MCF 10A (cell line): ENCODE measurements at regions of chr4 and their contacts with region 1.

Region 1: GRCh38 chr4:140170299-140170698 is 16.3 kb upstream of the MAML3 start:
- DNase-seq: no peak
- H3K4me3 Mint-ChIP-seq: no peak overlapping the region
- H3K27ac Mint-ChIP-seq: no peak overlapping the region
- H3K4me1 Mint-ChIP-seq: no peaks in the 10 kb centered on the region
- H3K27me3 Mint-ChIP-seq: no peaks in the 10 kb centered on the region
- CTCF ChIP-seq: no peak

Region 2: GRCh38 chr4:140186651-140187315 is 16.5 kb after region 1 on chr4:
- CTCF ChIA-PET with region 1: interaction called, 3 read pairs
- POLR2A ChIA-PET with region 1: interaction called, 10 read pairs
- intact Hi-C with region 1: no loop called
- DNase-seq: peak; percentile 89
- H3K4me3 Mint-ChIP-seq: no peak overlapping the region
- H3K27ac Mint-ChIP-seq: peak overlapping the region; percentile 87
- H3K4me1 Mint-ChIP-seq: peaks cover 17% of the 10 kb centered on the region
- H3K27me3 Mint-ChIP-seq: no peaks in the 10 kb centered on the region
- CTCF ChIP-seq: no peak